ENCODE measurements at regions of chr12 and their contacts with region 1.

Region 1: GRCh38 chr12:88763601-88764000 is 183.3 kb upstream of the KITLG start:
- DNase-seq: no peak
- H3K4me3 Mint-ChIP-seq: no peak overlapping the region
- H3K27ac Mint-ChIP-seq: no peak overlapping the region
- H3K4me1 Mint-ChIP-seq: no peaks in the 10 kb centered on the region
- H3K27me3 Mint-ChIP-seq: no peaks in the 10 kb centered on the region
- CTCF ChIP-seq: no peak

Region 2: GRCh38 chr12:88753066-88753465 is 10.5 kb before region 1 on chr12:
- CTCF ChIA-PET with region 1: interaction called, 12 read pairs
- intact Hi-C with region 1: no loop called
- DNase-seq: no peak
- H3K4me3 Mint-ChIP-seq: no peak overlapping the region
- H3K27ac Mint-ChIP-seq: no peak overlapping the region
- H3K4me1 Mint-ChIP-seq: peaks cover 50% of the 10 kb centered on the region
- H3K27me3 Mint-ChIP-seq: no peaks in the 10 kb centered on the region
- CTCF ChIP-seq: no peak